Activated CD4-positive, alpha-beta T cell treated with anti-CD3 and anti-CD28 coated beads for 36 hours (primary cell): ENCODE measurements at regions of chr5 and their contacts with region 1.

Region 1: DNA sequence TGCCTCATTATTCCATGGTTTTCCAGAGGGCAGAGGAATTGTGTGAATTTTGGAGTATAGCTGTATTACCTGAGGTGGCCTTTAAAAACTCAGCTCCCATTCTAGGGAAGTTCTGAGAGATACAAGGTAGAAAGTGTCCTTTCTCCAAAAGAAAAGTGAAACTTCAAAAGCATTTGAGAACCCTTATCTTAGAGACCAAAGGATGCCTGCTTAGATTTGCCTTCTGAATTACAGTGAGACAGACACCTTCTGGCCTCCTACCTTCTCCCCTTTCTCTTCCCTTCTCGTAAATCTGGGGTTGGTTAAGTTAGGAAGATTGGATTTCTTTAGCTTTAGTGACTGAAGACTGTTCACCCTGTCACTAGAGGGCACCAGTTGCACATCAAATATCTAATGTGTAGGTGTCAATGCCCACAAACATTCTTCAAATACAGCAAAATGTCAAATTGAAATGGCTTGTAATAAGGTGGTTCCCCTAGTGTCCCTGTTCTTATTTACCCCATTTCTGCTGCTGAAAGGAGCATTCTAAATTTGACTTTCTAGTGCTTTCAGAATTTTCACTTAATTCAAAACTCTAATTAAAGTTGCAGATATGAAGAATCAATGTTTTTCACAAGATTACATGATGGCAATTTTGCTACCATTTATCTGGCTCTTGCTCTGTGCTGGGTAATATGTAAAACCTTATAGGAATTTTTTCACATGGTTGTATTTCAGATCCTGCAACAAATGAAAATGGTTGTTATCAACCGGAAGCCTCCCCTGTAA is 46.7 kb downstream of the PRRC1 start:
- DNase-seq: peak; percentile 73
- ATAC-seq: peak; percentile 82
- H3K4me3 Mint-ChIP-seq: no peak overlapping the region
- H3K27ac Mint-ChIP-seq: no peak overlapping the region
- H3K4me1 Mint-ChIP-seq: peaks cover 8% of the 10 kb centered on the region
- H3K27me3 Mint-ChIP-seq: peaks cover 19% of the 10 kb centered on the region

Region 2: DNA sequence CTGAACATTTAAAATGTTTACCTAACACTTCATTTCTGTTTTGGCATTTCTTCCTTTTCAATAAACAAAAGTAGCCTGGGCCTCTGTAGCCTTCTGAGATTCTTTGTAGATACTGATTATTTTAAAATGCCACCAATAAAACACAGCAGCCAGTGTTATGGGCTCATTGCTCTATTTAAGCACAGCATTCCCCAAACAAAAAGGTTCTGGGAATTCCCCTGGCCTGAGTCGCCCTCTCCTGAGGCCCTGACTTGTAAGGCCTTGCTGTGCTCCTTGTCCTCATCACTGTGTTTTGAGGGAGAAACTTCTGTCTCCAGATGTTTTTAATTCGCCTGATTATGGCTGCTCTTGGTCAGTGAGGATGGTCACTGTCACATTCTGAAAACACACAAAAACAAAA is 51.7 kb after region 1 on chr5:
- CTCF ChIA-PET with region 1: no interaction called
- POLR2A ChIA-PET with region 1: no interaction called
- intact Hi-C with region 1: no loop called
- DNase-seq: no peak
- ATAC-seq: no peak
- H3K4me3 Mint-ChIP-seq: no peak overlapping the region
- H3K27ac Mint-ChIP-seq: no peak overlapping the region
- H3K4me1 Mint-ChIP-seq: no peaks in the 10 kb centered on the region
- H3K27me3 Mint-ChIP-seq: peaks cover 2% of the 10 kb centered on the region

Region 3: DNA sequence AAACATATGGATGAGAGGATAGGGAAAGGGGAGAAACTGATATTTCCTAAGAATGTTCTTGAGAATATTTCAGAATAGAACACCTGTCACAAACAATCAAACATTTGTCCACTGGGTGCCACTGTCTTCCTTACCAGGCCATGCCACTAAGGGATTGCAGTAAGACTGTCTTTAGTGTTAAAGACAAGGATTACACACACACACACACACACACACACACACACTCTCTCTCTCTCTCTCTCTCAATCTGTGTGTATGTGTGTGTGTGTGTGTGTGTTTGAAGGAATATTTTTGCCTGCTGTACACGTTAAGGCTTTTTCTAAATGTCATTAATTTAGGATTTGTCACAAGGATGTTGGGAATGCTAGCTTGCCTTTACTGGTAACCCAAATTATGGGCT is 193.4 kb after region 1 on chr5:
- CTCF ChIA-PET with region 1: interaction called, 3 read pairs
- POLR2A ChIA-PET with region 1: no interaction called
- intact Hi-C with region 1: loop called in 1 of 2 experiments (anchors 10 kb)
- DNase-seq: peak; percentile 45
- ATAC-seq: peak; percentile 80
- H3K4me3 Mint-ChIP-seq: no peak overlapping the region
- H3K27ac Mint-ChIP-seq: no peak overlapping the region
- H3K4me1 Mint-ChIP-seq: no peaks in the 10 kb centered on the region
- H3K27me3 Mint-ChIP-seq: no peaks in the 10 kb centered on the region

Region 4: GRCh38 chr5:127875235-127876021 is 311.2 kb after region 1 on chr5:
- CTCF ChIA-PET with region 1: no interaction called
- POLR2A ChIA-PET with region 1: no interaction called
- intact Hi-C with region 1: loop called (anchors 5 to 10 kb)
- DNase-seq: peak; percentile 60
- ATAC-seq: peak; percentile 91
- H3K4me3 Mint-ChIP-seq: no peak overlapping the region
- H3K27ac Mint-ChIP-seq: no peak overlapping the region
- H3K4me1 Mint-ChIP-seq: no peaks in the 10 kb centered on the region
- H3K27me3 Mint-ChIP-seq: no peaks in the 10 kb centered on the region

Region 5: GRCh38 chr5:128201065-128201926 is 637.1 kb after region 1 on chr5:
- CTCF ChIA-PET with region 1: interaction called, 11 read pairs
- POLR2A ChIA-PET with region 1: no interaction called
- intact Hi-C with region 1: loop called (anchors 1 kb)
- DNase-seq: peak; percentile 91
- ATAC-seq: peak; percentile 87
- H3K4me3 Mint-ChIP-seq: no peak overlapping the region
- H3K27ac Mint-ChIP-seq: no peak overlapping the region
- H3K4me1 Mint-ChIP-seq: peaks cover 37% of the 10 kb centered on the region
- H3K27me3 Mint-ChIP-seq: no peaks in the 10 kb centered on the region

Region 6: GRCh38 chr5:128498844-128499455 is 934.8 kb after region 1 on chr5:
- CTCF ChIA-PET with region 1: interaction called, 8 read pairs
- POLR2A ChIA-PET with region 1: no interaction called
- intact Hi-C with region 1: loop called in 1 of 2 experiments (anchors 5 kb)
- DNase-seq: no peak
- ATAC-seq: no peak
- H3K4me3 Mint-ChIP-seq: no peak overlapping the region
- H3K27ac Mint-ChIP-seq: no peak overlapping the region
- H3K4me1 Mint-ChIP-seq: no peaks in the 10 kb centered on the region
- H3K27me3 Mint-ChIP-seq: no peaks in the 10 kb centered on the region

Region 7: GRCh38 chr5:128674825-128675446 is 1110.8 kb after region 1 on chr5:
- CTCF ChIA-PET with region 1: no interaction called
- POLR2A ChIA-PET with region 1: no interaction called
- intact Hi-C with region 1: loop called in 1 of 2 experiments (anchors 1 kb)
- DNase-seq: peak; percentile 67
- ATAC-seq: peak; percentile 58
- H3K4me3 Mint-ChIP-seq: no peak overlapping the region
- H3K27ac Mint-ChIP-seq: no peak overlapping the region
- H3K4me1 Mint-ChIP-seq: no peaks in the 10 kb centered on the region
- H3K27me3 Mint-ChIP-seq: peaks cover 9% of the 10 kb centered on the region

Region 8: GRCh38 chr5:128844354-128844923 is 1280.3 kb after region 1 on chr5:
- CTCF ChIA-PET with region 1: no interaction called
- POLR2A ChIA-PET with region 1: no interaction called
- intact Hi-C with region 1: loop called in 1 of 2 experiments (anchors 10 kb)
- DNase-seq: no peak
- ATAC-seq: no peak
- H3K4me3 Mint-ChIP-seq: no peak overlapping the region
- H3K27ac Mint-ChIP-seq: no peak overlapping the region
- H3K4me1 Mint-ChIP-seq: no peaks in the 10 kb centered on the region
- H3K27me3 Mint-ChIP-seq: no peaks in the 10 kb centered on the region